A673 (cell line): ENCODE measurements at regions of chr1 and their contacts with region 1.

Region 1: DNA sequence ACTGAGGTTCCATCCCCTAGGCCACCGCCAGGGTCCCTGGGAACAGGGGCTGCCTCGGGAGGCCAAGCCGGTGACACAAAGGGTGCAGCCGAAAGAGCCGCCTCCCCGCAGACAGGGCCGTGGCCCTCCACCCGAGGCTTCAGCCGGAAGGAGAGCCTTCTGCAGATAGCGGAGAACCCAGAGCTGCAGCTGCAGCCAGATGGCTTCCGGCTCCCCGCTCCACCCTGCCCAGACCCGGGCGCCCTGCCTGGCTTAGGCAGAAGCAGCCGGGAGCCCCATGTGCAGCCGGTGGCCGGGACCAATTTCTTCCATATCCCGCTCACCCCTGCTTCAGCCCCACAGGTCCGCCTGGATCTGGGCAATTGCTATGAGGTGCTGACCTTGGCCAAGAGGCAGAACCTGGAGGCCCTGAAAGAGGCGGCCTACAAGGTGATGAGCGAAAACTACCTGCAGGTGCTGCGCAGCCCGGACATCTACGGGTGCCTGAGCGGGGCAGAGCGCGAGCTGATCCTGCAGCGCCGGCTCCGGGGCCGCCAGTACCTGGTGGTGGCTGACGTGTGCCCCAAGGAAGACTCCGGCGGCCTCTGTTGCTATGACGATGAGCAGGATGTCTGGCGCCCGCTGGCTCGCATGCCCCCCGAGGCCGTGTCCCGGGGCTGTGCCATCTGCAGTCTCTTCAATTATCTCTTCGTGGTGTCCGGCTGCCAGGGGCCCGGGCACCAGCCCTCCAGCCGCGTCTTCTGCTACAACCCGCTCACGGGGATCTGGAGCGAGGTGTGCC is 1.4 kb downstream of the KLHDC7A start:
- DNase-seq: no peak
- H3K4me3 ChIP-seq: no peak overlapping the region
- H3K27ac ChIP-seq: no peak overlapping the region
- H3K4me1 ChIP-seq: no peaks in the 10 kb centered on the region
- H3K27me3 ChIP-seq: no peaks in the 10 kb centered on the region
- CTCF ChIP-seq: no peak

Region 2: GRCh38 chr1:18505666-18506065 is 23.6 kb after region 1 on chr1:
- CTCF ChIA-PET with region 1: no interaction called
- POLR2A ChIA-PET with region 1: interaction called, 11 read pairs
- intact Hi-C with region 1: no loop called
- DNase-seq: no peak
- H3K4me3 ChIP-seq: no peak overlapping the region
- H3K27ac ChIP-seq: no peak overlapping the region
- H3K4me1 ChIP-seq: no peaks in the 10 kb centered on the region
- H3K27me3 ChIP-seq: no peaks in the 10 kb centered on the region
- CTCF ChIP-seq: no peak